Right ventricle myocardium inferior (tissue), 1 donor: ENCODE measurements at regions of chr6 and their contacts with region 1.

Region 1: GRCh38 chr6:163413345-163414116 is 987 bp upstream of the QKI start:
- DNase-seq: peak; percentile 95
- ATAC-seq: peak; percentile 92

Region 2: GRCh38 chr6:163180874-163181541 is 232.5 kb before region 1 on chr6:
- intact Hi-C with region 1: loop called (anchors 1 kb)
- DNase-seq: peak; percentile 86
- ATAC-seq: peak; percentile 95

Region 3: DNA sequence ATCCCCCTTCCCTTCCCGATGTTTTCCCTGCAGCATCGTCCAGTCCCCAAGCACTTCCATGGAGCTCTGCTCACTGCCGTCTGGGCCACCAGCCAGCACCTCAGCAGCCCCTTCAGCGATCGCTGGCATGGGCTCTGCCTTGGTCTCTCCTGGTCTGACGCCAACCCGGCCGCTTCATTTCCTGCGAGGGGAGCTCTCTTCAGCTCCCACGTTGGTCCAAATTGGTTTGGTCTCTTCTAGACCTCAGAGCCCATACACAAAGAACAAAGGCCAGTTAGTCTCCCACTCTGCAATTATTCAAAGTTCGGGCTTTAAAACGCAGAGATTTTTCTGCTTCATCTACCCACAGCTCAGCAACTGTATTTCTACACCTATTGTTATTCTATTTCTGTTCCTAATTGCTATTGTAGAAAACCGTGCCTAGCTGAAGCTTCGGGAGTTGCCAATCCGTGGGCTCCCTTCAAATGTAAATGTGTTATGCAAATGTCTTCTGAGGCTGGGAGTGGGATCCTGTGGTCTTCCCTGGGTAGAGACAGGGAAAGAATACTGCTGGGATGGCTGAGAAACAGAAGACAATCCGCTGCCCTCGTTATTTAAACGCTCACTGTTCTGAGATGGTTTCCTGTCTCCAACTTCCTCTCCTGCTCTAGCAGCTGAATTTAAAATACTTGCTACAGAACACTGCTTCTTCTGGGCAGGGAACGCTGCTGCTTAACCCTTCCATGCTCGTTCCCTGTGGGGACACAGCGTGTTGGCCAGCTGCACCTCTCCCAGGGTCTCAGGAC is 153.2 kb before region 1 on chr6:
- intact Hi-C with region 1: loop called (anchors 1 kb)
- DNase-seq: no peak
- ATAC-seq: peak; percentile 14

Region 4: GRCh38 chr6:163338671-163339405 is 74.7 kb before region 1 on chr6:
- intact Hi-C with region 1: loop called (anchors 2 kb)
- DNase-seq: no peak
- ATAC-seq: peak; percentile 58

Region 5: GRCh38 chr6:163711615-163712565 is 298.4 kb after region 1 on chr6:
- intact Hi-C with region 1: loop called (anchors 2 kb)
- DNase-seq: peak; percentile 91
- ATAC-seq: peak; percentile 85

Region 6: DNA sequence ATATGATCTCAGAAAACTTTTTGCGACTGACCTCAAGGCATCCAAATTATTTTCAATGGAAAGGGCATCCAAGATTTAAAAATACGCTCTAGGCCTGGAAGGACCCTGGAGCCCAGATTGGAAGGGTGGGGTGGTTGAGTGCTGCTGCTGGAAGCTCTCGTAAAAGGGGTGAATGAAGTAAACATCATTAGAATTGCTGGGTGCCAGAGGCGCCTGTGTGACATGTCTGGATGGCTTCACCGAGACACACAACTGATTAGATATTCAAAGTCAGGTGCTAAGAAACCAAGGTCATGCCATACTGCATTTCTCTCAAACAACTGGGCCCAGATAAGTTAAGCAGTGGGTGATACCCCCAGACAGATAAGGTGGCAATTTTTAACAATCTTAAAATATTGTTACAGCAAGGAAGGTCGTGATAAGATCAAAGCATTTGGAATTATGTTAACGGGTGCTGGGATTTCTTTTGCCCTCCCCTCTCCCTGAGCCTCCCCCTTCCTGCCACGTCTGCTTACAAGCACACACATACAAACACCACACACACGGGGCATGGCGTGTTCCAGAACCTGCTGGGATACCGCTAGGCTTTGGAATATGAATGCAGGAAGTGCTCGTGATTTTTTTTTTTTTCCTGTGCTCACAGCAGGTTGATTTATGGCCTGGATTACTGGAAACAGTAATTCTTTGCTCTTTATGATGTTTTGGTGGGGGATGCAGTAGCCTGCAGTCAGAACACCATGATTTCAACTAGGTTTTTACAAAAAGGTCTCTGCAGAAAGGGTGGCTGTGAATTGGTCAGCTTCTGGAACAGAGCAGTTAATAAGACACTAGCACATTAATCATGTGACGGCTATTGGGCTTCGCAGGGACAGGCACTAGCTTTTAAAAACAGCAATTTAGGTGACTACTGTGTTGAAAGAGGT is 552.2 kb after region 1 on chr6:
- intact Hi-C with region 1: loop called (anchors 2 kb)
- DNase-seq: no peak
- ATAC-seq: peak; percentile 58